HEK293 (cell line): ENCODE measurements at regions of chr13 and their contacts with region 1.

Region 1: DNA sequence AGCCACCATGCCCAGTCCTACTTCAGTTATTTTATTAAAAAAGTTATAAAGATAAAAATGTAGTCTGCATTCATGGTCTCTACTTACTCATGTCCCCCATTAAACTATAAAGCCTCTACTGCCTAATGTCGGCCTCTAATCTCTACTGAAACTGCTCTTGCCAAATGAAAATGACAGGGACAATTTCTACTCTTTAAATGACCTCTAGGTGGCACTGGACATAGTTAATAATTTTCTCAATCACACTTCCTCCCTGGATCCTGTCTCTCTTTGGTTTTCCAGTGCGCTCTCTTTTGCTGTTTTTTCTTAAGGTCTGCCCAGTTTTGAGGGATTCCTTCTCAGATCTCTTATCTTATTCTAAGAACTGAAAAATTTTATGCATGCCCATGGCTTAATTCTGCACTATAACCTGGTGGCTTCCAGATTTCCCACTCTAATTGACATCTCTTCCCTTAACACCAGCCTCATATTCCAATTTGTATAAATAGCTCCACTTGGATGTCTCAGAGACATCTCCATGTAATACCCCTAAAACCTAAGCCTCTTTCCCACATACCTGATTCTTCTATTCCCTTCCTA is 54.3 kb downstream of the MTMR6 start:
- H3K4me3 ChIP-seq: no peak overlapping the region
- H3K27ac ChIP-seq: no peak overlapping the region
- H3K4me1 ChIP-seq: no peaks in the 10 kb centered on the region
- CTCF ChIP-seq: no peak

Region 2: GRCh38 chr13:25069911-25070310 is 163.1 kb before region 1 on chr13:
- CTCF ChIA-PET with region 1: no interaction called
- POLR2A ChIA-PET with region 1: no interaction called
- H3K4me3 ChIP-seq: no peak overlapping the region
- H3K27ac ChIP-seq: no peak overlapping the region
- H3K4me1 ChIP-seq: no peaks in the 10 kb centered on the region
- CTCF ChIP-seq: no peak

Region 3: DNA sequence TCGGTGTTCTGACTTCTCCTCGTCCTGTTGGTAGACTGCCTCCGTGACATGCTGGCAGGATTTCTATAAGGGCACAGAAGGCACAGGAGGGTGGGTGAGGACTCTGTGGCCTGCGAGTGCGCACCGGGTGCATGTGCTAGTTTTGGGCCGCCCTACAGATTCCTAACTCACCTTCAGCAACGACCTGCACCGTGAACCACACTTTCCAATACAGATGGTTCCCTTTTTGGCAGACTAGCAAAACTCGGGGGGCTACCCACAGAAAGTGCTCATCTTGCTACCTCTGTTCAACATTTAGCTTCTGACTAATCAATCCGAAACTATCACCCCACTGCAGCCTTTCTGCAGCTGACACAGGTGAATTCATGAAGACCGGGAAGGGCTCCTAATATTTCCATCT is 46.8 kb before region 1 on chr13:
- CTCF ChIA-PET with region 1: no interaction called
- POLR2A ChIA-PET with region 1: no interaction called
- H3K4me3 ChIP-seq: no peak overlapping the region
- H3K27ac ChIP-seq: no peak overlapping the region
- H3K4me1 ChIP-seq: no peaks in the 10 kb centered on the region
- CTCF ChIP-seq: no peak

Region 4: GRCh38 chr13:25249001-25249543 is 16.0 kb after region 1 on chr13:
- CTCF ChIA-PET with region 1: interaction called, 10 read pairs
- POLR2A ChIA-PET with region 1: no interaction called
- H3K4me3 ChIP-seq: no peak overlapping the region
- H3K27ac ChIP-seq: no peak overlapping the region
- H3K4me1 ChIP-seq: no peaks in the 10 kb centered on the region
- CTCF ChIP-seq: no peak

Region 5: DNA sequence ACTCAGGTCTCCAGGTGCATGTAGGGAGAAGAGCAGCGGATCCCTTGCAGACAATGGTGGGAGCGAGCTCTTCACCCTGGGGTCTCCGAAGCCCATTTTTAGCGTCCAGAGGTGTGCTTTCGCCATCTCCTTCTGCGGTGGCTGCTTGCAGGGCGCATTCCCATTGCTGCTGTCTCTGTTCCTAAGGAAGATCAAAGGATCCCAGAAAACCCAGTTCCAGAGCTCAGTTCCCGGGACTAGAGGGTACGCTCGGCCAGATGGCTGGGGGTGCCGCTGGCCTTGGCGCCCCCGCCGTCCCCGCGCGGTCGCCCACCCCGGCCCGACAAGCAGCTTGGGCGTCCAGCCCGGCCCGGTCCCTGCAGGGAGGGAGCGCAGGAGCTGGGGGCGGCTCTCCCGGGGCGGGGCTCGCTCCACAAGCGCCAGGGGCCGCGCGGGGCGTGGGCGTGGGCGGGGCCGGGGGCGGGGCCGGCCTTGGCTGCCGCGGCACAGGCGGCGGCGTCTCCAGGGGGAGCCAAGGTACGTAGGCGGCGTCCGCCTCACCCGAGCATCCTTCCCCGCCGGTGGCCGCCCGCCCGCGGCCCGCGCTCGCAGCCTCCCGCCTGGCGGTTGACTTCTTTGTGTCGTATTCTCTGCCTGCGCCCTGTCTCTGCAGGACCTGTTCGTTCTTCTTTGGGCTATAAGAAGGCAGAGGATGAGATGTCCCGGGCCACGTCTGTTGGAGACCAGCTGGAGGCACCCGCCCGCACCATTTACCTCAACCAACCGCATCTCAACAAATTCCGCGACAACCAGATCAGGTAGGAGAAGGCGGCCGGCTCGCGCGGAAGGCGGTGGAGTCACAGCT is 235.5 kb after region 1 on chr13:
- CTCF ChIA-PET with region 1: no interaction called
- POLR2A ChIA-PET with region 1: no interaction called
- H3K4me3 ChIP-seq: peak overlapping the region; percentile 52
- H3K27ac ChIP-seq: no peak overlapping the region
- H3K4me1 ChIP-seq: no peaks in the 10 kb centered on the region
- CTCF ChIP-seq: 0 out of 2 replicates have a peak, but pooled peaks have one; percentile 16